Sigmoid colon (tissue), 7 donors: ENCODE measurements at regions of chr15 and their contacts with region 1.

Region 1: GRCh38 chr15:56160966-56161365 is 82.7 kb downstream of the RFX7 start:
- DNase-seq: no peak
- H3K4me3 ChIP-seq: no peak overlapping the region
- H3K27ac ChIP-seq: no peak overlapping the region
- H3K4me1 ChIP-seq: peaks cover 0 to 26% (median 9%) of the 10 kb centered on the region in 4 donors
- H3K27me3 ChIP-seq: no peaks in the 10 kb centered on the region
- CTCF ChIP-seq: no peak
- EP300 ChIP-seq: no peak
- POLR2A ChIP-seq: no peak

Region 2: GRCh38 chr15:55868707-55869106 is 292.3 kb before region 1 on chr15:
- intact Hi-C with region 1: loop called (anchors 5 kb)
- DNase-seq: no peak
- H3K4me3 ChIP-seq: no peak overlapping the region
- H3K27ac ChIP-seq: no peak overlapping the region
- H3K4me1 ChIP-seq: no peaks in the 10 kb centered on the region
- H3K27me3 ChIP-seq: no peaks in the 10 kb centered on the region
- CTCF ChIP-seq: no peak
- EP300 ChIP-seq: no peak
- POLR2A ChIP-seq: no peak

Region 3: GRCh38 chr15:56215769-56216168 is 54.8 kb after region 1 on chr15:
- intact Hi-C with region 1: no loop called
- DNase-seq: no peak
- H3K4me3 ChIP-seq: no peak overlapping the region
- H3K27ac ChIP-seq: no peak overlapping the region
- H3K4me1 ChIP-seq: peaks cover 0 to 10% (median 2%) of the 10 kb centered on the region in 4 donors
- H3K27me3 ChIP-seq: no peaks in the 10 kb centered on the region
- CTCF ChIP-seq: no peak
- EP300 ChIP-seq: no peak
- POLR2A ChIP-seq: no peak